MCF 10A (cell line): ENCODE measurements at regions of chr12 and their contacts with region 1.

Region 1: DNA sequence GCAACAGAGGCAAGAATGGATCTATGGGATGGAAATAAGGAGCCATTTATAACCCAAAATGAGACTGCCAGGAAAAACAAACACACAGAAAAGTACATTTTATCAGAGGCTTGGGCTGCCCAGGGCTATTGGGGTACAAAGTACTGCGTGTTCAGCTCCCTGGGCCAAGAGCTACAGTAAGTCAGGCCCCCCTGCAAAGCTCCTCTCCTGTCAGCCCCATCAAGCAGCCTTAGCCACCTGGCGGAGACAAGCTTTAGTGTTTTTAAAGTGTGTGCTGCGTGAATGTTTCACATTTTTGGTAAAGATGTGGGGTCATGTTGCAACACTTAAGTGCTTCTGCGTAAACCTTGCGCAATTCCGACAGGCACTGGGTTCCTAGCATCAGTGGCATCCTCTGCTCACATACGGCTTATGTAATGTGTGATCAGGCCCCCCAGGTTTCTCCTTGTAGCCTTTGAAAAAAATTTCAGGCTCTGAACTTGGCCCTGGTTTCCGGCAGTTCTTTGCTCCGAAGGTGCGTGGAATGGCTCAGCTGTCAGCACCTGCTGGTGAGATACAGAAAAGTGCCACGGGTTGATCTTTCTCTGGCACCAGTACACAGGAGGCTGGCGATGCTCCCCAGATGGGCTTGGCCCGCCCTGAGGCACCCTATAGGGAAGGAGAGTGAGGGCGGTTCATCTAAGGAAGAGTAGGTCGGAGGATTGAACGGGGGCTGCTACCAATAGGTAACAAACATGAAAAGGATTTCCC is 198.7 kb upstream of the EEA1 start:
- DNase-seq: peak; percentile 96
- H3K4me3 Mint-ChIP-seq: peak overlapping the region; percentile 49
- H3K27ac Mint-ChIP-seq: peak overlapping the region; percentile 81
- H3K4me1 Mint-ChIP-seq: peaks cover 33% of the 10 kb centered on the region
- H3K27me3 Mint-ChIP-seq: no peaks in the 10 kb centered on the region
- CTCF ChIP-seq: peak; percentile 33

Region 2: DNA sequence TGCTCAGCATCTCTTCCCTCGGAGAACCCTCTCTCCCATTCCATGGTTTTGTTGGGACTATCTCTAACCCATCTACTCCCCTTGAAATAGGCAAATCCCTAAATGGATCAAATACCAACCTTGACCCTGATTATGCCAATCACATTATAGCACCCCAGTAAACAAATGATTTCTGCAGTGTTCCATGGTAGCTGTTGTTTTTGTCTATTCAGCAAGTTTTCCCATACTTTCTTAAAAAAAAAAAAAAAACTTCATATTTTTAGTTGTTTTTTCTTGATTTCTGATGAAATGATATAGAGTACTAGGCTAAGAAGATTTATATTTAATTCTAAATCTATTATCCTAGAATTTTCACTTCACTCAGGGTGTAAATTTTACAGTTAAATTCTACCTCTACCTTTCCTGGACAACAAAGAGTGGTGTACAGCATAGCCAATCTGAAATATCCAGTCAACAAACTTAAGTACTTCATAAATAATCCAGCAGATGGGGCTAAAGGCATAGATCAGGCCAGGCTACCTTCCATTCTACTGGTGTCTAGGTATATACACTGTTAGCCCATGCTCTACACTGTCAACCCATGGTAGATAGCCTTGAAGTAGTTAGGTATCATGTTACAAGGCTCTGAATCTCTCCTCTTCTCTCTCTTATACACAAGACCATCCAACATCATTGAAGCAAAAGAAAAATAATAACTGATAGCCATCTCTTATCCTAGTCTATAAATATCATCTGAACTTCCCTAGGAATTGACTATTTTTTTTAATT is 342.8 kb before region 1 on chr12:
- CTCF ChIA-PET with region 1: no interaction called
- POLR2A ChIA-PET with region 1: no interaction called
- intact Hi-C with region 1: loop called (anchors 1 kb)
- DNase-seq: peak; percentile 80
- H3K4me3 Mint-ChIP-seq: peak overlapping the region; percentile 37
- H3K27ac Mint-ChIP-seq: peak overlapping the region; percentile 98
- H3K4me1 Mint-ChIP-seq: peaks cover 30% of the 10 kb centered on the region
- H3K27me3 Mint-ChIP-seq: no peaks in the 10 kb centered on the region
- CTCF ChIP-seq: peak; percentile 49

Region 3: DNA sequence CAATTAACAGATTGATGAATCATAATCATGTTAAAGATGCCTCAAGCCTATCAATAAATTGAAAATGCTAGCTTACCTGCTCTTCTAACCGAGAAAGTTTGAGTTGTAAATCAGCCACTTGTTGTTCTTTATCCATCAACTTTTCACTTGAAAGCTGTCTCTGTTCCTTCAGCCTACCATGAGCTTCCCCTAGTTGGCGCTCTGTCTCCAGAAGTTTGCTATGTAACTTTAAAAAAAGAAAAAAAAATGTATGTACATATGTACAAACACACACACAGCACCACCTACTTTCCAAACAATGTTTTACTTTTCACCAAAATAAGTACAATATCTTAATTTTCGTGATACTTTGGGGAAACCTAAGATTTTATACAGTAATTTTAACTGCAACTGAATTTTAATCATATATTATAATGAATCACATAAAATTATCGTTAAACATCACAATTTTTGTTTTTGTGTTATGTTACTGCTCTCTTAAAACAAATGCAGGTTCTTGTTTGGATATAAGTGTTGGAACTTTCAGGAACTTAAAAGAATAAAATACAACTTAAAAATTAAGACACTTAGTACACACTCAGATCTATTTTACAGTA is 299.8 kb before region 1 on chr12:
- CTCF ChIA-PET with region 1: no interaction called
- POLR2A ChIA-PET with region 1: no interaction called
- intact Hi-C with region 1: loop called (anchors 2 kb)
- DNase-seq: peak; percentile 69
- H3K4me3 Mint-ChIP-seq: no peak overlapping the region
- H3K27ac Mint-ChIP-seq: no peak overlapping the region
- H3K4me1 Mint-ChIP-seq: no peaks in the 10 kb centered on the region
- H3K27me3 Mint-ChIP-seq: no peaks in the 10 kb centered on the region
- CTCF ChIP-seq: peak; percentile 78

Region 4: GRCh38 chr12:93025145-93025805 is 102.5 kb before region 1 on chr12:
- CTCF ChIA-PET with region 1: interaction called, 10 read pairs
- POLR2A ChIA-PET with region 1: no interaction called
- intact Hi-C with region 1: loop called (anchors 1 kb)
- DNase-seq: peak; percentile 70
- H3K4me3 Mint-ChIP-seq: no peak overlapping the region
- H3K27ac Mint-ChIP-seq: no peak overlapping the region
- H3K4me1 Mint-ChIP-seq: no peaks in the 10 kb centered on the region
- H3K27me3 Mint-ChIP-seq: no peaks in the 10 kb centered on the region
- CTCF ChIP-seq: peak; percentile 51

Region 5: GRCh38 chr12:93137656-93138612 is 10.2 kb after region 1 on chr12:
- CTCF ChIA-PET with region 1: interaction called, 8 read pairs
- POLR2A ChIA-PET with region 1: interaction called, 45 read pairs
- intact Hi-C with region 1: no loop called
- DNase-seq: peak; percentile 96
- H3K4me3 Mint-ChIP-seq: peak overlapping the region; percentile 4
- H3K27ac Mint-ChIP-seq: peak overlapping the region; percentile 78
- H3K4me1 Mint-ChIP-seq: peaks cover 47% of the 10 kb centered on the region
- H3K27me3 Mint-ChIP-seq: no peaks in the 10 kb centered on the region
- CTCF ChIP-seq: no peak

Region 6: DNA sequence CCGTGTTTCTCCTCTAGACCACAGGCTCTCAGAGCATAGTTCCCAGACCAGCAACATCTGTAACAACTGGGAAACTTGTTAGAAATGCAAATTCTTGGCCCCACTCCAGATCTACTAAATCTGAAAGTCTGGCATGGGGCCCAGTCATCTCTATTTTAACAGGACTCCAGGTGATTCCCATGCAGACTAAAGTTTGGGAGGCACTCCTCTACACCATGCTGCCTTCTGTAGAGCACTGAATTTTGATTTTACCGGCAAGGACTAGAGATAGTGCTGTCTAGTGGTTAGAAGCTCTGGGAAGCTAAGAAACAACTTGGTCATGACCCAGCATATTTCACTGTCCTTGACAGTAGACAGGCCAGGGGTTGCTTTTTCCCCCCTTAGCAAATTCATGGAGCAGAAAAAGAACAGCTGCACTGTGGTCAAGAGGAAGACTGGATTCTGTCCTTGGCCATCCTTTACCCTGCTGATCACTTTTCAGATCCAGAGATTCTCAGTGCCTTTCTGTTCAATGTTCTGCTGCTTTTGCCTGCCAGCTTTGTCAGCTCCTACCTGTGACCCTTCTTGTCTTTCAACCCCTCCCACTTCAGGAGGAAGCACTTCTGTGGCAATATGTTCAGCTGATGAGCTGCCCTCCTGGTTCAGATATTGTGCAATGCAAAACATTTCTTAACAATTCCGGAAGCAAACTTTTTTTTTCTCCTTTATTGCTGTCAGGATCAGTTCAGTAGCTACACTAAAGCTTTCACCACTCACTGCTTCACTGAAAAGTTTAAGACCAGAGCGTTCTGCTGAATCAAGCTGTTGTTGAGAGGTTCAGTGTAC is 116.1 kb after region 1 on chr12:
- CTCF ChIA-PET with region 1: interaction called, 3 read pairs
- POLR2A ChIA-PET with region 1: interaction called, 11 read pairs
- intact Hi-C with region 1: loop called (anchors 5 kb)
- DNase-seq: peak; percentile 91
- H3K4me3 Mint-ChIP-seq: peak overlapping the region; percentile 56
- H3K27ac Mint-ChIP-seq: peak overlapping the region; percentile 69
- H3K4me1 Mint-ChIP-seq: peaks cover 25% of the 10 kb centered on the region
- H3K27me3 Mint-ChIP-seq: no peaks in the 10 kb centered on the region
- CTCF ChIP-seq: no peak

Region 7: DNA sequence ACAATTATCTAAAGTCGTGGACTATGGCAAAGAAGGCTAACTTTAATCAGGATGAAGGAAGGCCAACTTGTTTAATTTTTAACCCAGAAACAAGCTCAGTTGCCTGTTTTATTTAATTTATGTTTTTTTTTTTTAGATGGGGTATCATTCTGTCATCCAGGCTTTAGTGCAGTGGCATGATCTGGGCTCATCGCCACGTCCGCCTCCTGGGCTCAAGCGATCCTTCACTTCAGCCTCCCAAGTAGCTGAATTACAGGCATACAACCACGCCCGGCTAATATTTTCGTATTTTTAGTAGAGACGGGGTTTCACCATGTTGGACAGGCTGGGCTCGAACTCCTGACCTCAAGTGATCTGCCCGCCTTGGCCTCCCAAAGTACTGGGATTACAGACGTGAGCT is 269.7 kb after region 1 on chr12:
- CTCF ChIA-PET with region 1: interaction called, 6 read pairs
- POLR2A ChIA-PET with region 1: no interaction called
- intact Hi-C with region 1: loop called (anchors 5 kb)
- DNase-seq: no peak
- H3K4me3 Mint-ChIP-seq: no peak overlapping the region
- H3K27ac Mint-ChIP-seq: no peak overlapping the region
- H3K4me1 Mint-ChIP-seq: no peaks in the 10 kb centered on the region
- H3K27me3 Mint-ChIP-seq: no peaks in the 10 kb centered on the region
- CTCF ChIP-seq: no peak